IMR-90 (cell line): ENCODE measurements at regions of chr7 and their contacts with region 1.

Region 1: GRCh38 chr7:149838224-149838947 is at the start of gene ZNF862:
- DNase-seq: peak; percentile 97
- ATAC-seq: peak; percentile 99
- H3K4me3 ChIP-seq: peak within 1 kb of the TSS; percentile 99
- H3K27ac ChIP-seq: peak within 1 kb of the TSS; percentile 52
- H3K4me1 ChIP-seq: 0 out of 2 replicates have a peak, but pooled peaks cover 3% of the 10 kb centered on the region
- H3K27me3 ChIP-seq: peaks cover 10% of the 10 kb centered on the region; the same call in 1 of the 2 replicates
- CTCF ChIP-seq: no peak
- POLR2A ChIP-seq: peak; percentile 42; the same call in 1 of the 2 replicates
- RAD21 ChIP-seq: no peak
- total RNA-seq, gene ZNF862: 3.3 and 5.9 TPM in 2 replicates

Region 2: DNA sequence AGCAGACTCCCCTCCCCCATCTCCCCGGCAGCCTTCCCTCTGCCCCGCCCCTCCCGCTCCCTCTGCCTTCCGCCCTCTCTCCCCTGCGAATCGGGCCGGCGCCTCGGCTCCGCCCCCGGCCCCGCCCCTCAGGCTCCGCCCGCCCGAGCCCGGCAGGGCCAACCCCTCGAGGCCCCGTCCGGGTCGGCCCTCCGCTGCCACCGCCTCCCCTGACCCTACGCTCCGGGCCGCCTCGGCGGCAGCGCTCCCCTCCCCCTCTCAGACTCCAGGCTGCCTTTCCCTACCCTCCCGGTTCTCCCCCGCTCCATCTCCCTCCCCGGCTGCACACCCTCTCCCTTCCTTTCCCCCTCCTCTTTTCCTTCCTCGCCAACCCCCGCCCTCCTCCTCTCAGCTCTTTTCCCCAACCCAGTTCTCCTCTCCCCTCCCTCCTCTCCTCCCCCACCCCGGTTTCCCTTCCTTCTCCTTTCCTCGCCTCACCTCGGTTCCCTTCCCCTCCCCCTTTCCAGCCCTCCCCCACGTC is 66.6 kb before region 1 on chr7:
- CTCF ChIA-PET with region 1: no interaction called
- POLR2A ChIA-PET with region 1: no interaction called
- dilution Hi-C with region 1: no loop called
- in situ Hi-C with region 1: no loop called
- intact Hi-C with region 1: loop called (anchors 1 kb)
- DNase-seq: peak; percentile 70
- ATAC-seq: peak; percentile 99
- H3K4me3 ChIP-seq: peak overlapping the region; percentile 49
- H3K27ac ChIP-seq: peak overlapping the region; percentile 58
- H3K4me1 ChIP-seq: no peaks in the 10 kb centered on the region; the same call in 1 of the 2 replicates
- H3K27me3 ChIP-seq: peaks cover 28% of the 10 kb centered on the region
- CTCF ChIP-seq: no peak
- POLR2A ChIP-seq: no peak
- RAD21 ChIP-seq: no peak

Region 3: GRCh38 chr7:149873074-149873969 is 34.9 kb after region 1 on chr7 and contains the start of gene ATP6V0E2:
- CTCF ChIA-PET with region 1: no interaction called
- POLR2A ChIA-PET with region 1: no interaction called
- dilution Hi-C with region 1: no loop called
- in situ Hi-C with region 1: no loop called
- intact Hi-C with region 1: loop called (anchors 2 kb)
- DNase-seq: peak; percentile 89
- ATAC-seq: peak; percentile 97
- H3K4me3 ChIP-seq: peak within 1 kb of the TSS; percentile 74
- H3K27ac ChIP-seq: peak within 1 kb of the TSS; percentile 13; the same call in 1 of the 2 replicates
- H3K4me1 ChIP-seq: peaks cover 3% of the 10 kb centered on the region
- H3K27me3 ChIP-seq: no peaks in the 10 kb centered on the region
- CTCF ChIP-seq: no peak
- POLR2A ChIP-seq: peak; percentile 52; the same call in 1 of the 2 replicates
- RAD21 ChIP-seq: no peak
- total RNA-seq, gene ATP6V0E2: 5.7 and 10.3 TPM in 2 replicates

Region 4: DNA sequence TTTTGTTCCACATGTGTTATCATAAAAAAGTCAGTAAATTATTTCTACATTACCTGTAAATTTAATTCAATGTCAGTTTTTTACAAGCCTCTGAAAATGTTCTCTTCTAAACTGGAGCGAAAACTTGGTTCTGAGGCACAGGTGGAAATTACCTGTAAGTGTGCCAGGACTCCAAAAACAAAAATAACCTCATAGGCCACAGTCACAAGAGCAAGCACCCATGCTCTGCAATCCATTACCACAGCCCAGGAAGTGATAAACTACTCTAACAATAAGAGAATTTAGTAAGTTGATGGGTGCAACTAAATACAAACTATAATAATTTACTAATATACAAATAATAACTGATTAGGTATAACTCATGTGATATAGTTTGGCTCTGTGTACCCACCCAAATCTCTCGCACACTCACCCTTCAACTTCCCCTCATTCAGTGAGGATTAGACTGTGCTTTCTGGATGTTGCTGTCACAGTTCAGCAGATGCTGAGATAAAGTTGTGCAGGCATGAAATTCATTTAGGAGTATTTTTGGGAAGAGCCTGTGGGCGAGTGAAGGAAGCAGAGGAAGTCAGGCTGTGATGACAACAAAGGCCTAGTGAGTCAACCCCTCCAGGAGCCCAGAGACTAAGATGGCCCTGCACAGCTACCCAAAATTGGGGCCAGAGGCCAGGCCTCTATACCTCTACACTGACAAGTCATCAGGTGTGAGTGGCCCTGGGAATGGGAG is 810.1 kb after region 1 on chr7:
- CTCF ChIA-PET with region 1: no interaction called
- POLR2A ChIA-PET with region 1: no interaction called
- dilution Hi-C with region 1: no loop called
- in situ Hi-C with region 1: no loop called
- intact Hi-C with region 1: no loop called
- DNase-seq: no peak
- ATAC-seq: no peak
- H3K4me3 ChIP-seq: no peak overlapping the region
- H3K27ac ChIP-seq: no peak overlapping the region
- H3K4me1 ChIP-seq: no peaks in the 10 kb centered on the region
- H3K27me3 ChIP-seq: no peaks in the 10 kb centered on the region
- CTCF ChIP-seq: no peak
- POLR2A ChIP-seq: no peak
- RAD21 ChIP-seq: no peak